Astrocyte of the cerebellum (primary cell): ENCODE measurements at regions of chr15 and their contacts with region 1.

Region 1: GRCh38 chr15:27514526-27514925 is 543.5 kb downstream of the GABRG3 start:
- DNase-seq: no peak
- H3K4me3 ChIP-seq: no peak overlapping the region
- CTCF ChIP-seq: no peak

Region 2: DNA sequence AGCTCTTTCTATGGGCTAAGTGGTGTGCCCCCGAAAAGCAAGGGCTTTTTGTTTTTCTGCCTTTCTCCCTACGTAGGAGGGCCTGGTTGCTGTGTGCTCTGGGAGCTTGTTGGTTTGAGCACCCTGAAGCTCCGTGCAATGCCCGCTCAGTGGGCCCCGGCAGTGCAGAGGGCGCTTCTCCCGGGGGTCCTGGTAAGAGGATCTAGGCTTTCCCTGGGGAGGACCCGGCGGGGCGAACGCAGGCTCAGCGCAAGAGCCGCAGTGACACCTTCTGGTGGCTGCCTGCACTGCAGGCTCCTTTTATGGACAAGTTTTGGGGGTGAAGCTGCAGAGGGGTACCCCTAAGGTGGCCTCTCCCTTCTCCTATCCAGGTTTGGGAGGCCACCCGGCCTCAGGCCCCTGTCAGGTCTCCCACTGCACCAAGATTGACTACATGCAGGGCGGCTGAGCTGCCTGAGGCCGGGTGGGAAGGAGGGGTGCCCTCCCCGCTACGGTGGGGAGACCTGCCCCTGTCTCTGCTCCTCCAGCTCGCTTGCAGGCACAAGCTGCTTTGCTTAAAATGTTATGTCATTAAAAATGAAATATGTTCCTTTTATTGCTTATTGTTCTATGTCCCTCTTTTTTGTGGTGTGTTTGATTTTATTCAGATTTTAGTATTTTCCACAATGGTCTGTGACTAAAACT is 155.6 kb before region 1 on chr15:
- in situ Hi-C with region 1: no loop called
- DNase-seq: no peak
- H3K4me3 ChIP-seq: no peak overlapping the region
- CTCF ChIP-seq: peak; percentile 76

Region 3: DNA sequence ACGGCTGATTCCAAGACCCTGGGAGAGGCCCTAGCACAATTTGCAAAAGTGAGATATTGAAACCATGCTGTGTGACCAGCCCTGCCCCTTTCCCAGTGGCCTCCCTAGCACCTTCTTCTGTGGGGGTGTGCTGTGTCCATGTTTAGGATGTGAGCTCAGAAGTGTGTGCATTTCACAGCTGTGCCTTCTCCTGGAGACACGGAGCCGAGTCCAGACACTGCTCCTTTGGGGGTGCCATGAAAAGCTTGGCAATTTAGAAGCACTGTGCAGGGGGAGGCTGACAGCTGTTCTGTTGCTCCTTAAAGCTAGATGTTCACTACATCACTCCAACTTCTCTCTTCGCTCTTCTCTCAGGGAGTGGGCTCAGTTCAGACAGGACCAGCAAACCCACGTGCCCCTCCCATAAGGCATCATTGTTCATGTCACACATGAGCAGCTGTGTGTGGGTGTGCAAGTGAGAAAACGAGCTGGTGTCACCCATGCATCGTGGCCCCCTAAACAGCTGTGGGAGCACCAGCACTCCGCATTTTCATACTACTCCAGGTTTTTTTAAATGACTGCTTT is 50.9 kb before region 1 on chr15:
- in situ Hi-C with region 1: no loop called
- DNase-seq: no peak
- H3K4me3 ChIP-seq: no peak overlapping the region
- CTCF ChIP-seq: no peak

Region 4: GRCh38 chr15:27601239-27601960 is 86.9 kb after region 1 on chr15:
- in situ Hi-C with region 1: loop called (anchors 25 kb)
- DNase-seq: no peak
- H3K4me3 ChIP-seq: no peak overlapping the region
- CTCF ChIP-seq: no peak

Region 5: GRCh38 chr15:27679731-27680471 is 165.4 kb after region 1 on chr15:
- in situ Hi-C with region 1: loop called (anchors 25 kb)
- DNase-seq: no peak
- H3K4me3 ChIP-seq: no peak overlapping the region
- CTCF ChIP-seq: no peak

Region 6: GRCh38 chr15:27956285-27956684 is 441.8 kb after region 1 on chr15:
- in situ Hi-C with region 1: loop called (anchors 25 kb)
- DNase-seq: no peak
- H3K4me3 ChIP-seq: no peak overlapping the region
- CTCF ChIP-seq: no peak